H1 (cell line): ENCODE measurements at regions of chr11 and their contacts with region 1.

Region 1: GRCh38 chr11:36724742-36725385 is 126.8 kb upstream of the RAG2 start:
- DNase-seq: no peak
- H3K4me3 ChIP-seq: no peak overlapping the region
- H3K27ac ChIP-seq: no peak overlapping the region
- H3K4me1 ChIP-seq: no peaks in the 10 kb centered on the region; a peak in 1 of 7 replicates
- H3K27me3 ChIP-seq: peaks cover 2 to 7% (median 4%) of the 10 kb centered on the region in 4 experiments; a peak in 4 of 7 replicates
- CTCF ChIP-seq: no peak
- EP300 ChIP-seq: no peak
- POLR2A ChIP-seq: no peak
- RAD21 ChIP-seq: no peak

Region 2: DNA sequence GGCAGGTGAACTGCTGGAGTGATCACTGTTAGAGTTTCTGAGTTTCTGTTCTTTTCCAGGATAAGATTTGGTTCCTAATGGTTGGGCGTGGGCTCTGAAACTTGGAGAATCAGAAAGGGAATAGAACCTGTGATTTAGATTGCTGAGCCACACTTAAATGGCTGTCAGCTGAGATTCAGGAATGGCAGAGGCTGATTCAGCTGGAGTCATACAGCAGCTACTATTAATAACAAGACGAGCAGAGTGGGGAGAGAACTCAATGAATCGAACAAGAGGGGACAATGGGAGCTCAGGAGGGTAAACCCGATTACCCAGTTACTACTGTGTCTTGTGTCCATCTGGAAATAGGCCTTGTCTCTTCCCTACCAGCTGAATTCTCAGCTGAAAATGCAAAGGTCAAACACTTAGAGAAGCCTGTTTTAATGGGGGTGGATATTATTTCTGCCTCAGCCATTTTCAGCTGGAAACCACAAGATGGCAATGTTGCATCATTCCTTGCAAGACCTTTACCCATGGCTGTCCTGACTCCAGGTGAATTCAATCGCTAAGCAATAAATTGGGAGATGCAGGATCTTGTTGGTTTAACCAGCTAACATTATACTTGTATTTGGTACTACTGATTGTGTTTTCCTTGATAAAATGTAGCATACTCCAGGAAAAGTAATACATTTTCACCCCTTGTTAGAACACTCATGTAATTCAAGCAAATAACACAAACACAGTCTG is 22.4 kb before region 1 on chr11:
- CTCF ChIA-PET with region 1: interaction called, 20 read pairs
- POLR2A ChIA-PET with region 1: no interaction called
- DNase-seq: peak in 1 of 2 experiments; percentile 10
- H3K4me3 ChIP-seq: no peak overlapping the region
- H3K27ac ChIP-seq: no peak overlapping the region
- H3K4me1 ChIP-seq: peaks cover 0 to 9% (median 5%) of the 10 kb centered on the region in 4 experiments; a peak in 5 of 7 replicates
- H3K27me3 ChIP-seq: no peaks in the 10 kb centered on the region; a peak in 1 of 7 replicates
- CTCF ChIP-seq: peak in 2 of 3 experiments; percentile 92 to 96; a peak in 3 of 4 replicates
- EP300 ChIP-seq: no peak
- POLR2A ChIP-seq: no peak
- RAD21 ChIP-seq: peak; percentile 99

Region 3: GRCh38 chr11:36711106-36711825 is 13.6 kb before region 1 on chr11:
- CTCF ChIA-PET with region 1: interaction called, 19 read pairs
- POLR2A ChIA-PET with region 1: no interaction called
- DNase-seq: no peak
- H3K4me3 ChIP-seq: no peak overlapping the region
- H3K27ac ChIP-seq: no peak overlapping the region
- H3K4me1 ChIP-seq: no peaks in the 10 kb centered on the region
- H3K27me3 ChIP-seq: peaks cover 0 to 2% (median 0%) of the 10 kb centered on the region in 4 experiments; a peak in 1 of 7 replicates
- CTCF ChIP-seq: peak; percentile 13 to 50 (median 21); a peak in 3 of 4 replicates
- EP300 ChIP-seq: no peak
- POLR2A ChIP-seq: no peak
- RAD21 ChIP-seq: 0 out of 4 replicates have a peak, but pooled peaks of 1 of the 2 experiments have one; percentile 4